Esophagus squamous epithelium (tissue), 5 donors: ENCODE measurements at regions of chr2 and their contacts with region 1.

Region 1: DNA sequence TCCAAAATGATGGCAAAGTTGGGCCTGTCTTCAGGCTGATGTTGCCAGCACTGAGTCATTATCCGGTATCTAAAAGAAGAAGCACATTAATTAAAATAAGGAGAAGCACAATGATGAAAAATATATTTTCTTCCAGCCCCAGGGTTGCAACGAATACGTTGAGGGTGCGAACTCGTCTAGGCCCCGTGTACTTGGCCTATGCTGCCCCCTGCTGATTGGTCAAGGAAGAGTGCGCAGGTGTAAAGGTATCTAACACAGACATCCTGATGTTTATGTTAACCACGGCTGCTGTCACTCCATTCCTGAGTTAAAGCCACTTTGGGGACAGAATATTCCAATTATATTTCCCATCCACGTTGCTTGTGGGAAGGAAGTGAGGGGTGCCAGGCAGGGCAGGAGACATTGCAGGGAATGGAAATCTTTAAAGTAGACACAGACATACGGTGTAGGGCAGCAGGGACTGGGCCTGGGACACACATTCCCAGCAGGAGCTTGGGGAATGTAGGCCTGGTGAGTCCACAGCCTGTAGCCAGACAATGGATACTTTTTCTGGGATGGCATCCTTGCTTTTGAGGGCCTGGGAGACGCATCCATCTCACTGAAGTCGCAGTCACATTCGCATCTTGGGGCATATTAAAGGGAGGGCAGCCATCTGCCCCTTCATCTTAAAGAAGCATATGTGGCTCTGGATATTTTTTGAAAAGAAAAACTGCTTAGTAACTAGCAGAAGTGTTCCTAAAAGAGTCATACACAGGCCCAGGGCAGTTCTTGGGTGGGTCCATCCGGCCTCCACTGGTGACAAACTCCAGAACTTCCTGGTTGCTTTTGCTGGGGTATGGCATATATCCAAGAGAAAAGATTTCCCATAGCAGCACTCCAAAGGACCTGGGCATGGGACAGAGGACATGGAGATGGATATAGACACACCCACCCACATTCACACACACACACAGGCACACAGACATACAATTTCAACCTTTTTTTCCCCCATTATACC is 81.9 kb downstream of the CLIP4 start:
- DNase-seq: no peak
- H3K4me3 ChIP-seq: no peak overlapping the region
- H3K27ac ChIP-seq: no peak overlapping the region
- H3K4me1 ChIP-seq: peaks cover 0 to 11% (median 0%) of the 10 kb centered on the region in 3 donors
- H3K27me3 ChIP-seq: no peaks in the 10 kb centered on the region
- CTCF ChIP-seq: peak; percentile 52 to 86 (median 80)
- POLR2A ChIP-seq: no peak

Region 2: DNA sequence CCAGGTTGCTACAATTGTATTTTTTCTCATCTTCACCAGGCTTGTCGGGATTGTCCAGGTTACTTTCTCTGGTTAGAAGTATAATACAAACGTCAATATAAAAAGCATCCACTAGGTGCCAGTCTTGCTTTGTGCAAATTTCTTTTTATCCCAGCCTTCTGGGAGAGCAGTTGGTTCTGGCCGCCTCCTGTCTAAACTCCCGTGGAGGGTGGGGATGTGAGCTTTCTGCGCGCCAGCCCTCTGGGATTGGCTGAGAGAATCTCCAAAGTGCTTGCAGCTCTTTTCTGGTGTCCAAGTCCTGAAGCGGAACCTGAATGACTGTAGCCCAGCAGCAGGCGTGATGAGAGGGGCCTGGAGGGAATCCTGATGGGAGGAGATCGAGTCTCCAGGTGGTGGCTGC is 238.4 kb before region 1 on chr2:
- intact Hi-C with region 1: loop called (anchors 5 kb)
- DNase-seq: no peak
- H3K4me3 ChIP-seq: no peak overlapping the region
- H3K27ac ChIP-seq: no peak overlapping the region
- H3K4me1 ChIP-seq: peaks cover 0 to 12% (median 4%) of the 10 kb centered on the region in 3 donors
- H3K27me3 ChIP-seq: no peaks in the 10 kb centered on the region
- CTCF ChIP-seq: peak; percentile 62 to 81 (median 72)
- POLR2A ChIP-seq: no peak

Region 3: GRCh38 chr2:29042561-29043075 is 154.5 kb before region 1 on chr2:
- intact Hi-C with region 1: loop called (anchors 10 kb)
- DNase-seq: no peak
- H3K4me3 ChIP-seq: no peak overlapping the region
- H3K27ac ChIP-seq: no peak overlapping the region
- H3K4me1 ChIP-seq: peaks cover 0 to 26% (median 0%) of the 10 kb centered on the region in 3 donors
- H3K27me3 ChIP-seq: no peaks in the 10 kb centered on the region
- CTCF ChIP-seq: no peak
- POLR2A ChIP-seq: no peak

Region 4: DNA sequence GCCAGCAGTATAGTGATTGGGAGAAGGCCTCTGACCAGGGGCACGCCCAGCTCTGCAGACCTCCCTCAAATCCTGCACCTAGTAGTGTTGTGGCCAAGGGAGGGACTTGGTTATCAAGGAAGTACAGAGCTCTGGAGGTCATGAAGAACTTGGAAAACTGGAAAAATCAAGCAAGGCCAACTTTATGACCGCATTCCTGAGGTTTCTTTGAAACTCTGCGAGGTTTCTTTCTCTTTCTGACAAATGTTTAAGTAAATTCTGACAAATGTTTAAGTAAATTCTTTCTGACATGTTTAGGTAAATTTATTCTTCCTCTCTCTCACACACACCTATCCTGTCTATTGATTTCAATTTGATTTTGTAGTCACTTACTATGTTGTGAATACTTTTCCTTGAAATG is 50.9 kb before region 1 on chr2:
- intact Hi-C with region 1: no loop called
- DNase-seq: no peak
- H3K4me3 ChIP-seq: no peak overlapping the region
- H3K27ac ChIP-seq: no peak overlapping the region
- H3K4me1 ChIP-seq: no peaks in the 10 kb centered on the region
- H3K27me3 ChIP-seq: no peaks in the 10 kb centered on the region
- CTCF ChIP-seq: no peak
- POLR2A ChIP-seq: no peak